ENCODE measurements at regions of chr5 and their contacts with region 1.

Region 1: DNA sequence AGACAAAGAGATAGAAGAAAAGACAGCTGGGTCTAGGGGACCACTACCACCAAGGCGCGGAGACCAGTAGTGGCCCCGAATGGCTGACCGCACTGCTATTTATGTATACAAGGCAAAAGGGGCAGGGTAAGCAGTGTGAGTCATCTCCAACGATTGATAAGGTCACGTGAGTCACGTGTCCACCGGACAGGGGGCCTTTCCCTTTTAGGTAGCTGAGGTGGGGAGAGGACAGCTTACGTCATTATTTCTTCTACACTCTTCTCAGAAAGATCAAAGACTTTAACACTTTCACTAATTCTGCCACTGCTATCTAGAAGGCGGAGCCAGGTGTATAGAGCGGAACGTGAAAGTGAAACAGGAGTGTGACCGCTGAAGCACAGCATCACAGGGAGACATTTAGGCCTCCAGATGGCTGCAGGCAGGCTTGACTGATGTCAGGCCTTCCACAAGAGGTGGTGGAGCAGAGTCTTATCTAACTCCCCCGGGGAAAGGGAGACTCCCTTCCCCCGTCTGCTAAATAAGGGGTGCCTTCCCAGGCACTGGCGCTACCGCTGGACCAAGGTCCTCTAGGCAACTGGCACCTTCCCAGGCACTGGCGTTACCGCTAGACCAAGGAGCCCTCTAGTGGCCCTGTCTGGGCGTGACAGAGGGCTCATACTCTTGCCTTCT is 6.1 kb upstream of the PRR16 start:
- DNase-seq: peak; percentile 25 to 90
- H3K4me3 ChIP-seq: peak overlapping the region; percentile 47 to 60
- H3K27ac ChIP-seq: peak overlapping the region; percentile 42 to 58
- H3K4me1 ChIP-seq: peaks cover 3 to 12% of the 10 kb centered on the region in 2 donors
- H3K27me3 ChIP-seq: no peaks in the 10 kb centered on the region
- CTCF ChIP-seq: peak; percentile 57 to 79 (median 79)

Region 2: GRCh38 chr5:119943148-119943547 is 514.8 kb before region 1 on chr5:
- intact Hi-C with region 1: loop called (anchors 5 kb)
- DNase-seq: no peak
- H3K4me3 ChIP-seq: no peak overlapping the region
- H3K27ac ChIP-seq: no peak overlapping the region
- H3K4me1 ChIP-seq: no peaks in the 10 kb centered on the region
- H3K27me3 ChIP-seq: no peaks in the 10 kb centered on the region
- CTCF ChIP-seq: peak in 1 of 3 experiments; percentile 36

Region 3: DNA sequence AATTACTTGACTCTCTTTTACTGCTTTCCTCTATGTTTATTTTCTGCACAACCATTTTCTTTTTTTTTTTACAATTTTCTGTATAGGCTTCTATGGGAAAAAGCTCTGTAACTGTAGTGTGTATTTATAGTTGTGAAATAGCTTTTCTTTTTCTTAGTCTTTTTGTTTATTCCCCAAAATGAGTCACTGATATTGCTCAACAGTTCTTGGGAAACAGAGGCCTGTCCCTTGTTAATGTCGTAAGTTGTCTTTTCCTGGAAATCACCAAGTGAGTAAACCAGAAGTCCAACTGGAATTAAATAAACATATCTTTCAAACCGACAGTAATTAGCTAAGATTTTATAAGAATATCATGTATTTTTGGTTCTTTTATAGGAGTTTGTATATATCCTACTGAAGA is 318.9 kb before region 1 on chr5:
- intact Hi-C with region 1: loop called (anchors 5 kb)
- DNase-seq: peak in 1 of 2 donors; percentile 66
- H3K4me3 ChIP-seq: no peak overlapping the region
- H3K27ac ChIP-seq: peak overlapping the region; percentile 78 to 80
- H3K4me1 ChIP-seq: peaks cover 0 to 6% of the 10 kb centered on the region in 2 donors
- H3K27me3 ChIP-seq: no peaks in the 10 kb centered on the region
- CTCF ChIP-seq: no peak

Region 4: DNA sequence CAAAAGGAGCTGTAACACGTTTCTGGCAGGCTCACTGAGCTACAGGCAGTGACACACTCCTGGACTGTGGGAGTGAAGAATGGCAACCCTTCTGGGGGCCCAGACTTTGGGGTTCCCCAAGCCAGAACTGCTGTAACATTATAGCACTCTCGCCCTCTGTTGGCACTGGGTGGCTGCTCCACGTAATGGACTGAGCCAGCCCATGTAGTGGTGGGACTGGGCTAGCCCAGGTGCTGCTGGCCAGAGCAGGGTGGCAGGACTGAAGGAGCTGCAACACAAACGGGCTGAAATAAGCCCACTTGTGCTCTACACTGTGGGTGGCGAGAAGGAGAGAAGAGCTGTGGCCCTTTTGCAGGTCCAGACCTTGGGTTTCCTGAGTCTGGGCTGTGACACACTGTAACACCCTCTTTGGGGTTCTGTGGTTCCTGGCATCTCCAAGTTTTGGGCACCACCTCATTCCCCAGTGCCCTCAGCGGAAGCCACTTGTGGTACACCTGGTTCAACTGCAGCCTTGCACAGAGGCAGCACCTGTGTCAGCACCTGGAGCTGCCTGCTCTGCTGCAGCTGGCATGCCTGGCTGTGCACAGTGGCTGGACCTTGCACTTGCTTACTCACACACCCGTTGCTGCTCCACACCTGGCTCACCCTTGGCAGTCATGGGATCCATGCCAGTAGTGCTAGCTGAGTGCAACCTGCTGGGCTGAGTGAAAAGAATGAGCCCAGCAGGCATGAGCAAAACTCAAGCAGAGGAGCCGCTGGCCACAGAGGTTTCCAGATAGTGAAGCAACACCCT is 88.9 kb before region 1 on chr5:
- intact Hi-C with region 1: no loop called
- DNase-seq: no peak
- H3K4me3 ChIP-seq: no peak overlapping the region
- H3K27ac ChIP-seq: no peak overlapping the region
- H3K4me1 ChIP-seq: no peaks in the 10 kb centered on the region
- H3K27me3 ChIP-seq: no peaks in the 10 kb centered on the region
- CTCF ChIP-seq: no peak

Region 5: DNA sequence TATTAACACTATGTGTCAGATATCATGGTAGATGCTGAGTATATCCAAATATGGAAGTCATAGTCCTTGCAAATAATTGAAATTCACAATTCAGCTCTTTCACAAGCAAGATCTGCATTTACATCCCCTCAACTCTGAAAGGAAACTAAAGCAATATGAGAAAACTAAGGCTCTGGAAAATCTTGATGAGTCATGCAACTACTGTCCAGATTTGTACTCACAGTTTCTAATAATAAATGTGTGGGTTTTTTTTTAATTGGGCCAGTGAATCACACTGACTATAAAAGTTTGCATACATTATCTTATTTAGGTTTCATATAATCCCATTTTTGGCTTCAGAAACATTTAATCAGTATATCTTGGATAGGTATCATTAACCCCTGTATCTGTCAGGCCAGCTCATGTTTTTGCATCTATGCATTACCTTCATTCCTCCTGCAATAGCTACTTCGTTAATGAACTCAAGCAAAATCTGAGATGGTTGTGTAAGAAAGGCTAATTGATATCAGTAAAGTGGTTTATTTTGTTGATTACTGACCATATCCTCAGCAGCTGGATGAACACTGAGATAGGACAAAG is 52.6 kb before region 1 on chr5:
- intact Hi-C with region 1: loop called (anchors 5 kb)
- DNase-seq: no peak
- H3K4me3 ChIP-seq: no peak overlapping the region
- H3K27ac ChIP-seq: no peak overlapping the region
- H3K4me1 ChIP-seq: peaks cover 0 to 8% of the 10 kb centered on the region in 2 donors
- H3K27me3 ChIP-seq: no peaks in the 10 kb centered on the region
- CTCF ChIP-seq: no peak

Region 6: GRCh38 chr5:120568711-120569110 is 110.7 kb after region 1 on chr5:
- intact Hi-C with region 1: no loop called
- DNase-seq: no peak
- H3K4me3 ChIP-seq: no peak overlapping the region
- H3K27ac ChIP-seq: no peak overlapping the region
- H3K4me1 ChIP-seq: no peaks in the 10 kb centered on the region
- H3K27me3 ChIP-seq: no peaks in the 10 kb centered on the region
- CTCF ChIP-seq: no peak